ENCODE measurements at regions of chr15 and their contacts with region 1.

Region 1: DNA sequence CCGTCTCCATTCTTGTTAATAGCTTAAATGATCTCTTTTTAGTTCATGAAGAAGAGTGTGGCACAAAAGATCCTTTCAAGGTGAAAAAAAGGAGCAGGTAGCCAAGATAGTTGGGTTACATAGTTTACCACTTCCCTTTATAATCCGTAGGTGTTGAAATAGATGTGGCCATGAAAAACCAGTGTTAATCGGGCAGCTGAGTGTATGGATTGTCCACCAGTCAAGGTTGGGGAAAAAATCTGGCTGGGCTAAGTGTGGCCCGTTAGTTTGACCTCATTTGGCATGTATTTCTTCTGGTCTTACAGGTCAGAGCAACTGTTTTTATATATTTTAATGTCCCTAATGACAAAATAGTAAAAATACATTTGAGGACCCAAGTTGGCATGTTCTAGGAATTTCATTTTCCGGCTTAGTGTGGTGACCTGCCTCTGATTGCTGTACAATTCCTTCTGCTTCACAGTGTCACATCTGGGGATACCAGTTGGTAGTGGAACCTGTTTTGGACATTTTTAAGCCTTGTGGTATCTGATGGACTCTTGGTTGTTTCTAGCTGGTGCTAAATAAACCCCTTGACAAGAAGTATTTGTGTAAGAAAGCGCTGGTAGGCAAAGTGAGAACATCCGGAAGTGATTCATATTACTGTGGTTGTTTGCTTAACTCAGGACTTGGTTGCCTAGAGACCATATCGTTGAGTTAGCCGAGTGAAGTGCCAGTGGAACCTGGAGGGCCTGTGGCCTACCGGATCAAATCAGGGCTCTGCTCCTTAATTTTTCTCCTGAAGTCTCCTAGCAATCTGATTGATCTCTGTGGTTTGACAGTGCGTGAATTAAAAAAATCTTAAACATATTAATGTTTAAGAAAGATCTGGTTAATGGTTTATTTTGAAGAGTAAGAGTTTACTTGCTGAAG is 12.6 kb downstream of the IQGAP1 start:
- DNase-seq: peak; percentile 63 to 79 (median 73)
- ATAC-seq: peak; percentile 96 to 98 (median 98)
- H3K4me3 ChIP-seq: peak overlapping the region in 10 of 12 donors; percentile 1 to 42 (median 14)
- H3K27ac ChIP-seq: peak overlapping the region; percentile 70 to 94 (median 84)
- H3K4me1 ChIP-seq: peaks cover 7 to 99% (median 60%) of the 10 kb centered on the region in 12 donors
- H3K27me3 ChIP-seq: no peaks in the 10 kb centered on the region
- CTCF ChIP-seq: no peak
- POLR2A ChIP-seq: peak in 1 of 2 donors; percentile 17

Region 2: DNA sequence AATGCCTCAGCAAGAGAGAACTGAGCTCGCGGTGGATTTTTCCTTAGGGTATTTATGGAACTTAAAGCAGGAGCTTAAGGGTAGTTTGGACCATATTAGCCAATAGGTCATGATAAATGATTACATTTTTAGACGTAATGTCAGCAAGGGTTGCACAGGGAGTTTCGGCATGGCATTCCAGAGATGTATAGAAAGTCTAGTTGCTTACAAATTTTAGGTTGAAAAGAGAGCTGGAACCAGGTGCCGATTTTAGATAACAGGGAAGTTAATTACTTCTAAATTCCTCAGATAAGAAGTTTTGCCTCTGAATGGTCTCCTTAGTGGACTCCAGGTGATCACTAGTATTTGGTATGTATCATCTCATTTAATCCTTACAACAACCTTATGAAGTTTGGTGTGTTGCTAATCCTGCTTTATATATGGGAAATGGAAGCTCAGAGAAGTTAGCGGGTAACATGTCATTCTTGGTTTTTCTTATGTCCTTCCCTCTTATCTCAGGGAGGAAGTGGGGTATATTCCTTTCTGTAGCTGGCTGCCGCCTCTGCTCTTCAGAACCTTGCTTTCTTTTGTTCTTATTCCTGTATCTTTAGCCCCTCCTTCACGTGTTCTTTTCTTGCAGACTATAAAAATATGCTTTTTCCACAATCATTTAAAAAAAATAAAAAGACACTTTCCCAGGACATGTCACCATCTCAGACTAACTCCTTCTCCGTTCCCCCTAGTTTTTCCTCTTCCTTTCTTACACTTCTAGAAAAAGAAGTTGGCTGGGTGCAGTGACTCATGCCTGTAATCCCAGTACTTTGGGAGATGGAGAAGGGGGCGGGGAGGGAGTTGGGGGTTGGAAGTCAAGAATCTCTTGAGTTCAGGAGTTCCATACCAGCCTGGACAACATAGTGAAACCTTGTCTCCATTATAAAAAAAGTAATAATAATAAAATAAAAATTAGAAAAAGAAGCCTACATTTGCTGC is 13.0 kb after region 1 on chr15:
- intact Hi-C with region 1: loop called in 1 of 10 experiments (anchors 2 kb)
- DNase-seq: no peak
- ATAC-seq: peak in 3 of 4 donors; percentile 36 to 57 (median 46)
- H3K4me3 ChIP-seq: peak overlapping the region in 1 of 12 donors; percentile 15
- H3K27ac ChIP-seq: peak overlapping the region in 7 of 12 donors; percentile 3 to 86 (median 33)
- H3K4me1 ChIP-seq: peaks cover 5 to 72% (median 51%) of the 10 kb centered on the region in 12 donors
- H3K27me3 ChIP-seq: no peaks in the 10 kb centered on the region
- CTCF ChIP-seq: no peak
- POLR2A ChIP-seq: no peak

Region 3: GRCh38 chr15:90436952-90437351 is 36.3 kb after region 1 on chr15:
- intact Hi-C with region 1: loop called in 1 of 10 experiments (anchors 5 kb)
- DNase-seq: no peak
- ATAC-seq: no peak
- H3K4me3 ChIP-seq: no peak overlapping the region
- H3K27ac ChIP-seq: peak overlapping the region in 1 of 12 donors; percentile 3
- H3K4me1 ChIP-seq: peaks cover 0 to 48% (median 23%) of the 10 kb centered on the region in 12 donors
- H3K27me3 ChIP-seq: no peaks in the 10 kb centered on the region
- CTCF ChIP-seq: no peak
- POLR2A ChIP-seq: no peak

Measured in heart left ventricle (tissue), 16 donors.